Activated CD4-positive, alpha-beta T cell treated with anti-CD3 and anti-CD28 coated beads, Interleukin-2, amount 10 ng/mL, durations not matched to agents 24 days and 14 days (primary cell): ENCODE measurements at regions of chr18 and their contacts with region 1.

Region 1: GRCh38 chr18:48951448-48952286 is 902 bp upstream of the SMAD7 start:
- DNase-seq: peak; percentile 90
- H3K4me3 Mint-ChIP-seq: peak overlapping the region; percentile 94
- H3K27ac Mint-ChIP-seq: peak overlapping the region; percentile 90
- H3K4me1 Mint-ChIP-seq: peaks cover 39% of the 10 kb centered on the region
- H3K27me3 Mint-ChIP-seq: no peaks in the 10 kb centered on the region

Region 2: DNA sequence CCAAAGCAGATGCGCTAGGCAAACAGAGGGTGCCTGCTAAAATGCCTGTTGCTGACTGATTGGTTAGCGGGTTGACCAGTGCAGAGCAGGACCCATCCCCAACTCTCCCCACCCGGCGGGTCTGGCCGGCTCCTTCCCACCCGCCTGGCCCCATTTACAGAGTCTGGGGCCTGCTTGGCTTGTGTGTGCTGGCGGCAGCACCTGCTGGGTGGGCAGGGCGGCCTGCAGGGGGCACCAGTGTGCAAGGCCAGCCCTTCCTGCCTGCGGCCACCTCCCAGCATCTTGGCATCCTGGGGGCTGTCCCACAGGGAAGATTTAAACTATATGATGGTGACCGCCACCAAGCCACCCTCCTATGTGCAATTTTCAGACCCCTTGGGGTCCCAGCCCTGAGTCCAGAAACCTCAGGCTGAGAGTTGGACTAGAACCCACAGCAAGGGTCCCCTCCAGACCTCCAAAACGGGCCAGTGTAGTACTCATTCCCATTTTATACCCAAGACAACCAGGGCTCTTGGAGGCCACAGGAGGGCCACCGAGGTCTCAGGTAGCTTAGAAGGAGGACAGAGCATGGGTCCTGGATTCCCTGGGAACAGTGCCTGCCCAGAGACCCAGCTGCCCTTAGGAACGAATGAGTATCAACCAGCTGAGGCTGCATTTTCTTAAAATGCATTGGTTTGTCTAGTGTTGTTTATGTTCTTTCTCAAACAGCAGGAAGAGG is 174.5 kb before region 1 on chr18:
- intact Hi-C with region 1: loop called (anchors 2 kb)
- DNase-seq: peak; percentile 91
- H3K4me3 Mint-ChIP-seq: no peak overlapping the region
- H3K27ac Mint-ChIP-seq: no peak overlapping the region
- H3K4me1 Mint-ChIP-seq: peaks cover 6% of the 10 kb centered on the region
- H3K27me3 Mint-ChIP-seq: no peaks in the 10 kb centered on the region

Region 3: DNA sequence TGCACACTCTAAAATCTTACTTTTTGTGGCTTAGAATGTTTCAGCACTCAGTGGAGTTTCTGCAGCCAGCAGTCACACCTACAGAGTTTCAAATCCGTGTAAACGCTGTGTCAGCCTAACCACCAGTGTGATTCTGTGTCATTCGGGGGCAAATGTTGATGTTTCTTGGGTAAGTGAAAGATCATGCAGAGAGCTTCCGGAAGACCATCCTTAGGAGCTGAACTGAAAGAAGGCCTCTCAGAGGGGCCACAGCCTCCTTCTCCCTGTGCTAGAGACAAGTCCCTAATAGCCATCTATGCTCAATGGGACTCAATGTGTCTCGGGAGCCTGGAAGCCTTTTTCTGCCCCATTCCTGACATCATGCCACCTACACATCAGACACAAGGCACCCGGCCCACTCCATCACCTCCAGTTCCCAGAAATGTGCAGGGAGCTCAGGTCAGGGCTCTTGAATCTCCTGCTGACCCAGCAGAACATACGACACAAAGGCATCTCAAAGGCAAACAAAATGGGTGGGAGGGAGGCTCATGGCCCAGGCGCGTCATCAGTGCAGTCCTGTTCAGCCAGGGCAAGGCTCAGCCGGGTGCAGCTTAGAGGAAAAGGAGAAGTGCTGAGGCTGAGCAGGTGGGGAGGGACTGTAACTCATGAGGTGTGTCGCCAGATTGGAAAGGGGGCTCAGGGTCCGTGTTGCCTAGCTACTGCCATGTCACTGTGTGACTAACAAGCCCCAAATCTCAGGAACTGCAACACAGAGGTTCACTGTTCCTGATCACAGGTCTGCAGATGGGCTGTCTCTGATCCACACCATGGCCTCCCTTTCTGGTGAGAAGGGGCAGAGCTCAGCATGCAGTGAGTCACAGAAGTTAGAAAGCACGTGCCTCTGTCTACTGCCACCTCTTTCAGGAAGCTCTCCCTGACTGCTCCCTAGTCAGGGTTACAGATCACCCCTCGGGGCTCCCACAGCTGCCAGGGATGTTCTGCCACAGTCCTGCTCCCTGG is 82.9 kb before region 1 on chr18:
- intact Hi-C with region 1: loop called (anchors 1 kb)
- DNase-seq: peak; percentile 83
- H3K4me3 Mint-ChIP-seq: peak overlapping the region; percentile 73
- H3K27ac Mint-ChIP-seq: peak overlapping the region; percentile 97
- H3K4me1 Mint-ChIP-seq: peaks cover 28% of the 10 kb centered on the region
- H3K27me3 Mint-ChIP-seq: no peaks in the 10 kb centered on the region

Region 4: DNA sequence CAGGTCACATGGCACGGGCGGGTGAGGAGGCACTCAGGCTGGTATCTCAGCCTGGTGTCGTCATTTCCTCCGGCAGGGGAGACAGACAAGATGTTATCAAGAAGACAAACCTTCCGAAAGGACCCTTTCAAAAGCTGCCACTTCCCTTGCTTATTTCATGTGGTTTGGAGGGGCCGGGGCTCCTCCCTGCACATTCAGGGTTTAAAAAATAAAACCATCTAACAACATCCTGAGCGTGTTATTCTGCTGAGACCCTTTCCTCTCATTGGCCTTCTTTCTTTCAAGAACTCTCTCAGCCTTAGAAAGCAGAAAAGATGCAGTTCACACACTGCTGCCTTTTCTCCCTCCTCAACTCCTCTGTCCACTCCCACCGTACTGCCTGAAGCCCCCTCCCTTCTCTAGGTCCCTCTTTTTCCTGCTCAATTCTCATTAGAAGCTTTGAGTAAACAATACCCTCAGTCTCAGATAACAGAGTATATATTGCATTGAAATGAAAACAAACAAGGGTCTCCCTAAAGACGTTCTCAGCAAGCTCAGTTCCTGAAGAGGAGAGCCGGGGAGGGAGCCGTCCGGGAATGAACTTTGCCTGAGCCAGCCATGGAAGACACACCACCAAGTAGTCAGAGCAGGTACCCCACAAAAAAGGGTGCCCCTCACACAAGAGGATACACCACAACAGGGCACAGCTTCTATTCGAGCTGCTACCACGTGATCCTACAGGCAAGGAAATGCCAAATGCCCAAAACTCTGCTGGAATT is 10.6 kb before region 1 on chr18:
- intact Hi-C with region 1: loop called (anchors 1 kb)
- DNase-seq: peak; percentile 94
- H3K4me3 Mint-ChIP-seq: peak overlapping the region; percentile 82
- H3K27ac Mint-ChIP-seq: peak overlapping the region; percentile 91
- H3K4me1 Mint-ChIP-seq: peaks cover 88% of the 10 kb centered on the region
- H3K27me3 Mint-ChIP-seq: no peaks in the 10 kb centered on the region

Region 5: GRCh38 chr18:49459404-49460171 is 507.9 kb after region 1 on chr18:
- intact Hi-C with region 1: no loop called
- DNase-seq: peak; percentile 66
- H3K4me3 Mint-ChIP-seq: peak overlapping the region; percentile 85
- H3K27ac Mint-ChIP-seq: peak overlapping the region; percentile 74
- H3K4me1 Mint-ChIP-seq: peaks cover 22% of the 10 kb centered on the region
- H3K27me3 Mint-ChIP-seq: peaks cover 1% of the 10 kb centered on the region

Region 6: GRCh38 chr18:49486953-49487710 is 535.5 kb after region 1 on chr18 and contains the start of gene C18orf32:
- intact Hi-C with region 1: loop called (anchors 10 kb)
- DNase-seq: peak; percentile 98
- H3K4me3 Mint-ChIP-seq: peak within 1 kb of the TSS; percentile 89
- H3K27ac Mint-ChIP-seq: peak within 1 kb of the TSS; percentile 94
- H3K4me1 Mint-ChIP-seq: peaks cover 42% of the 10 kb centered on the region
- H3K27me3 Mint-ChIP-seq: no peaks in the 10 kb centered on the region
- total RNA-seq, gene C18orf32: 20.4 and 26.1 TPM in 2 replicates